ENCODE measurements at regions of chr6 and their contacts with region 1.

Region 1: GRCh38 chr6:42171813-42172581 is 1.2 kb upstream of the GUCA1A start:
- DNase-seq: no peak
- H3K4me3 ChIP-seq: no peak overlapping the region
- CTCF ChIP-seq: no peak

Region 2: DNA sequence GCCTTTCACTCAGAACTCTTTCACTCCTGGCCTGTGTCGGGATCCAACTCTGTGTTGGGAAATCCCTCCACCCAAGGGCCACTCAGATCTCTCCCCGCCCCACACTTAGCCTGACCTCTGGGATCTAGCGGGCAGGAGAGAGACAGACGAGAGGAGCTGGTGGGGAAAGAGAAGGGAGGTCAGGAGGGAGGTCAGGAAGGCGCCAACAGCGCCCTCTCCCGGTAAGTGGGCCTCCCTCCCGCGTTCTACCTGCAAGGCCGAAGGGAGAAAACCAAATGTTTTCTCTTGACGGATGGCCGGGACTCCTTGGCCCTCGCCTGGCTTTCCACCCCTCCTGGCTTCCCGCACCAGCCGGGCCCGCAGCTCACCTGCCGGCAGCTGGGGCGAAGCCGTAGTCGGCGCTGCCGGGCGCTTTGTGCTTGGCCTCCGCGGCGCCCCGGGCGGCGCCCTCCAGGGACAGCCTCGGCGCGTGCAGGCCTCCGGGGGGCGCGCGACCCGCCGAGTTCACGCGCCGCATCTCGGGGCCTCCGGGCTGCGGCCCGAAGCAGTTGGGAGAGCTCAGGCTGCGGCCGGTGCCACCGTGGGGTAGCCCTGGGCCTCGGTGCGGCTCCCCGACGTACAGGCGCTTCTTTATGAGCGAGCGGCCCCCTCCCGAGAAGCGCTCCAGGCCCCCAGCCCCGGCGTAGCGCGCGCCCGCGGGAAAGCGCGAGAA is 67.7 kb before region 1 on chr6:
- in situ Hi-C with region 1: loop called (anchors 5 kb)
- DNase-seq: no peak
- H3K4me3 ChIP-seq: peak overlapping the region; percentile 3
- CTCF ChIP-seq: peak; percentile 62

Measured in astrocyte of the cerebellum (primary cell).